Prostate gland (tissue), 2 donors: ENCODE measurements at regions of chr20 and their contacts with region 1.

Region 1: GRCh38 chr20:38645980-38646858 is 44.6 kb downstream of the ARHGAP40 start:
- DNase-seq: peak; percentile 67
- H3K4me3 ChIP-seq: peak overlapping the region; percentile 5 to 15
- H3K27ac ChIP-seq: no peak overlapping the region
- H3K4me1 ChIP-seq: no peaks in the 10 kb centered on the region
- H3K27me3 ChIP-seq: no peaks in the 10 kb centered on the region
- CTCF ChIP-seq: peak; percentile 63 to 93 (median 92)
- POLR2A ChIP-seq: no peak

Region 2: DNA sequence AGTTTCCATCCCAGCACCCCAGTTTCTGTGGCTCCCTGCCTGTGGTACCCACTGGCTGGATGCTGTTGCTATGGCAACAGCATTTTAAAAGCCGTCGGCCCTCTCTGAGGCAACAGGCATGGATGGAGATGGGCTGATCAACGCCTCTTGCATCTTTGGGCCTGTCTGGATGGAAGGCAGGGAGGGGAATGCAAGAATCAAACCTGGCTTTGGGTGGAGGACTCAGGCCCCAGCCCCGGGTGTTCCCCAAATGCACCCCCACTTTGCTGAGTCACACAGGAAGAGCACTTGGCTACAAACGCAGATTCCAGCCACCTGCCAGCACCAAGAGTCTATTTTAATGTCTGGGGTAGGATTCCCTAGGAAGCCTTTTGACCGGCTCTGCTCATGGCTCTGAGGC is 435.5 kb before region 1 on chr20:
- intact Hi-C with region 1: no loop called
- DNase-seq: no peak
- H3K4me3 ChIP-seq: no peak overlapping the region
- H3K27ac ChIP-seq: no peak overlapping the region
- H3K4me1 ChIP-seq: no peaks in the 10 kb centered on the region
- H3K27me3 ChIP-seq: no peaks in the 10 kb centered on the region
- CTCF ChIP-seq: no peak
- POLR2A ChIP-seq: no peak

Region 3: DNA sequence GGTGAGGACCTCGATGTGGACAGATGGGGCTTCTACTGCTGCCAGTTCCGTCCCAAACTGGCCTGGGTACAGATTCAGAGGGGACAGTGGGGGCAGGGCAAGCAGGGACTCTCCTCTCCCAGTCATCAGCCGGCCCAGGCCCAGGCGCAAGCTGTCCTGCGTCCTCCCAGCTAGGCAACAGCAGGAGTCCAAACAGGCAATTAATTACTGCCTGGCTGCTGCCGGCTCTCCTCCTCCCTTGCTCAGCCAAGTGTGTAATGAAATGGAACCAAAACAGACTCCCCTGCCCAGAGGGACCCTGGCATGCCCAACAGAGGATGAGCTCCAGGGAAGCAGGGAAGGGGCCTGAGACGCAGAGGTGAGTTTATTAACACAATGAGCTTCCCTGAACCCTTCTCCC is 60.3 kb after region 1 on chr20:
- intact Hi-C with region 1: no loop called
- DNase-seq: no peak
- H3K4me3 ChIP-seq: no peak overlapping the region
- H3K27ac ChIP-seq: no peak overlapping the region
- H3K4me1 ChIP-seq: no peaks in the 10 kb centered on the region
- H3K27me3 ChIP-seq: no peaks in the 10 kb centered on the region
- CTCF ChIP-seq: no peak
- POLR2A ChIP-seq: no peak

Region 4: GRCh38 chr20:38730989-38731737 is 84.9 kb after region 1 on chr20:
- intact Hi-C with region 1: loop called (anchors 1 kb)
- DNase-seq: peak; percentile 46
- H3K4me3 ChIP-seq: peak overlapping the region in 1 of 2 donors; percentile 0
- H3K27ac ChIP-seq: no peak overlapping the region
- H3K4me1 ChIP-seq: no peaks in the 10 kb centered on the region
- H3K27me3 ChIP-seq: peaks cover 55% of the 10 kb centered on the region
- CTCF ChIP-seq: peak; percentile 83 to 97 (median 90)
- POLR2A ChIP-seq: no peak

Region 5: GRCh38 chr20:38751360-38751976 is 105.2 kb after region 1 on chr20:
- intact Hi-C with region 1: loop called (anchors 2 kb)
- DNase-seq: no peak
- H3K4me3 ChIP-seq: no peak overlapping the region
- H3K27ac ChIP-seq: no peak overlapping the region
- H3K4me1 ChIP-seq: no peaks in the 10 kb centered on the region
- H3K27me3 ChIP-seq: no peaks in the 10 kb centered on the region
- CTCF ChIP-seq: peak in 3 of 4 experiments; percentile 42 to 75 (median 73)
- POLR2A ChIP-seq: no peak

Region 6: GRCh38 chr20:38893565-38894090 is 247.4 kb after region 1 on chr20:
- intact Hi-C with region 1: loop called (anchors 10 kb)
- DNase-seq: peak; percentile 36
- H3K4me3 ChIP-seq: no peak overlapping the region
- H3K27ac ChIP-seq: no peak overlapping the region
- H3K4me1 ChIP-seq: no peaks in the 10 kb centered on the region
- H3K27me3 ChIP-seq: no peaks in the 10 kb centered on the region
- CTCF ChIP-seq: peak; percentile 56 to 83 (median 72)
- POLR2A ChIP-seq: no peak

Region 7: DNA sequence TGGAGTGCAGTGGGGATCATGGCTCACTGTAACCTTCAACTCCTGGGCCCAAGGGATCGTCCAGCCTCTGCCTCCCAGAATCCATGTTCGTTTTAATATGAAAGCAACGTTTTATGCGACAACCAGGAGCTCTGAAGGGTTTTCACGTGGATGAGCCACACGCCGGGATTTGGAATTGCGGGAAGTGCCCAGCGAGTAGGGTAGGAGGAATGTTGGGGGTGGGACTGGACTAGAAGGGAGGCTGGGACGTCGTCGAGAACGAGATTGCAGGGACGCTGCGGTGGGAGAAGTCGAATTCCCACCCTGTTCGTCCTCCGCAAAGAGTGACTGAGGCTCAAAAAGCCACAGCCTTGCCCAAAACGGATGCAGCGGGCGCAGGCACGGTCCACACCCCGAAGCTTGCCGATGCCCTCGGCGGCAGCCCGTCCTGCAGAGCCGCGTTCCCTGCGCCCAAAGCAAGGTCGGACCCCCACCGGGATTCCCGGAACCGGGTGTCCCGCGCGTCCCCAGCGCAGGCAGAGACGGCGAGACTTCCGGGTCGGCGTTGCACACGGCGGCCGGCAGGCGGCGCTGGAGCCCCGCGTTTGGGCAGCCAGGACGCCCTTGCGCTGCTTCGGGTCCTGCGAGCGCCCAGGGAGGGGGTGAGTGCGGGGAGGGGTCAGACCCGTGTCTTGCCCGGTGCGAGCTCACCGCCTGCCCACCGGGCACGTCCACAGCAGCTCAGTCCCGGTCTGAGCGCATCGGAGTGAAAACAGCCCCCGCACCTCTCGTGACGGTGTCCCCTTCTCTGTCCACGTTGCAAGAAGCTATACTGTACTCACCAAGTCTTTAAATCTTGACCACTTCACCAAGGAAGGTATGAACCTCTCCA is 403.7 kb after region 1 on chr20:
- intact Hi-C with region 1: loop called (anchors 10 kb)
- DNase-seq: peak; percentile 67
- H3K4me3 ChIP-seq: peak overlapping the region; percentile 43 to 56
- H3K27ac ChIP-seq: peak overlapping the region; percentile 2 to 46
- H3K4me1 ChIP-seq: no peaks in the 10 kb centered on the region
- H3K27me3 ChIP-seq: no peaks in the 10 kb centered on the region
- CTCF ChIP-seq: peak; percentile 92 to 97 (median 94)
- POLR2A ChIP-seq: no peak